CD4-positive, alpha-beta memory T cell (primary cell): ENCODE measurements at regions of chr17 and their contacts with region 1.

Region 1: DNA sequence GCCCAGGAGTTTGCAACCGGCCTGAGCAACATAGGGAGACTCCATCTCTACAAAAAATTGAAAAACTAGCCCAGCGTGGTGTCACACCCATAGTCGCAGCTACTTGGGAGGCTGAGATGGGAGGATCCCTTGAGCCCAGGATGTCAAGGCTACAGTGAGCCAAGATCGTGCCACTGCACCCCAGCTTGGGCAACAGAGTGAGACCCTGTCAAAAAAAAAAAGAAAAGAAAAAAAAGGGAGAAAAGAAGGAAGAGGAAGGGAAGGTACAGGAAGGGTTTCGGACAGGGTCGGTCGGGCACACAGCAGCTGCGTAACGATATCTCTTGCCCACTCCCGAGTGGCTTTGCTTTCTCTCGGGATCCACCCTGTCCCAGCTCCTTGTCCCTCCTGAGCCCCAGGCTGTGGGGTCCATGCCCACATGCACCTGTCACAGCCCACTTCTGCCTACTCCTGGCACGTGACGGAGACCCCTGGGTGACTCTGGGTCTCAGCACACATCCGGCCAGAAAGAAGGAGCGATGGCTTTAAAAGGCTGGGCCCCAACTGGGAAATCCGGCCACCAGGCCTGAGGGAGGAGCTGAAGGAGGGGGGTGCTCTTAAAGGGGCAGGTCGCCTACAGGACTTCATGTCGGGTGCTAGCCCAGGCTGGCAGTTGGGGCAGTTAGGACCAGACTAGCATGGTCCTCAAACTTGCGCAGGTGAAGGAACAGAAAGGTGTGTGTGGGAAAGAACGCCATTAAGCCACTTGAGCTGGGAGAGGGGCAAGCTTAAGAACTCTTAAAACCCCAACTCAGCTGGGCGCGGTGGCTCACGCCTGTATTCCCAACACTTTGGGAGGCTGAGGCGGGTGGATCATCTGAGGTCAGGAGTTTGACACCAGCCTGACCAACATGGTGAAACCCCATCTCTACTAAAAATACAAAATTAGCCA is at the start of gene GHDC:
- DNase-seq: peak; percentile 75 to 84 (median 76)
- H3K4me3 ChIP-seq: peak within 1 kb of the TSS; percentile 64 to 97
- H3K4me3 Mint-ChIP-seq: peak within 1 kb of the TSS; percentile 82 to 96 (median 93)
- H3K27ac ChIP-seq: peak within 1 kb of the TSS; percentile 70
- H3K27ac Mint-ChIP-seq: peak within 1 kb of the TSS; percentile 60 to 95 (median 89)
- H3K4me1 ChIP-seq: peaks cover 20% of the 10 kb centered on the region
- H3K4me1 Mint-ChIP-seq: peaks cover 15 to 25% (median 20%) of the 10 kb centered on the region in 4 donors
- H3K27me3 ChIP-seq: no peaks in the 10 kb centered on the region
- H3K27me3 Mint-ChIP-seq: no peaks in the 10 kb centered on the region
- total RNA-seq, gene GHDC: 23.9 to 25.3 TPM

Region 2: DNA sequence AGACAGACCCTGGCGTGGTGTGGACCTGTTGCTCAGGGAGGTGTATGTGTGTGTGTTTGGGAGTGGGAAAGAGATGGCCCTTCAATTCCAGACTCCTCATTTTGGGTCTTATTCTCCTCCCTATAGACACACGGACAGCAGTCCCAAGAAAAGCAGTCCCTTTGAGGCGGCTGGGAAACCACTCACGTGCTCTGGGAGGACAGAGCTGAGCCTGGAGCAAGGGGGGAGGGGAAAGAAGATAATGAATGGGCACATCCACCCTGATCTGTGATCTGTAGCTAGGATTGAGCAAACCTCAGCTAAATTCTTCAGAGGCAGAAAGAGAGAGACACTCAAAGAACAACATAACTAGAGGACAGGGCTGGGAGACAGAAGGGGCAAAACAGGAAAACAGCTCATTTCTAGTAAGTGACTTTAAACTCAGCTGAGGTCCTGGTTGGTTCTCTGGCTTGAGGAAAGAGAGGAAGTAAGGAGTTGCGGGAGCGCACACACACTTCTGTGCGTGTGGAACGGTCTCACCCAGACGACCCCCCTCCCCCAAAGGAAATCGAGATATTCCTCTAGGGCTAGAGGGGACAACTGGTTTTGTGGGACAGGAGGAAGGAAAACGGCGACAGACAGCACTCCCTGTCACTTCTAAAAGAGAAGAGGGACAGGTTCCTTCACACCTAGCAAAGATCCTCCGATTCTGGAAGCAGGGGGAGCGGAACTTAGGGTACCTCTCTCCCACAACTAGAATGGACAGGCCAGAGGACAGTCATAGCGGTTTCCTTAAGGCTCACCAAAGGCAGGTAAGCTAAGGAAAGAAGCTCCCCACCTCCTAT is 40.1 kb before region 1 on chr17:
- CTCF ChIA-PET with region 1: no interaction called
- POLR2A ChIA-PET with region 1: interaction called, 3 read pairs
- intact Hi-C with region 1: loop called (anchors 1 kb)
- DNase-seq: no peak
- H3K4me3 ChIP-seq: peak overlapping the region; percentile 86 to 96
- H3K4me3 Mint-ChIP-seq: peak overlapping the region; percentile 89 to 98 (median 94)
- H3K27ac ChIP-seq: peak overlapping the region; percentile 96
- H3K27ac Mint-ChIP-seq: peak overlapping the region; percentile 82 to 98 (median 96)
- H3K4me1 ChIP-seq: peaks cover 42% of the 10 kb centered on the region
- H3K4me1 Mint-ChIP-seq: peaks cover 24 to 49% (median 37%) of the 10 kb centered on the region in 4 donors
- H3K27me3 ChIP-seq: no peaks in the 10 kb centered on the region
- H3K27me3 Mint-ChIP-seq: no peaks in the 10 kb centered on the region